GM13977 (cell line): ENCODE measurements at regions of chr13 and their contacts with region 1.

Region 1: DNA sequence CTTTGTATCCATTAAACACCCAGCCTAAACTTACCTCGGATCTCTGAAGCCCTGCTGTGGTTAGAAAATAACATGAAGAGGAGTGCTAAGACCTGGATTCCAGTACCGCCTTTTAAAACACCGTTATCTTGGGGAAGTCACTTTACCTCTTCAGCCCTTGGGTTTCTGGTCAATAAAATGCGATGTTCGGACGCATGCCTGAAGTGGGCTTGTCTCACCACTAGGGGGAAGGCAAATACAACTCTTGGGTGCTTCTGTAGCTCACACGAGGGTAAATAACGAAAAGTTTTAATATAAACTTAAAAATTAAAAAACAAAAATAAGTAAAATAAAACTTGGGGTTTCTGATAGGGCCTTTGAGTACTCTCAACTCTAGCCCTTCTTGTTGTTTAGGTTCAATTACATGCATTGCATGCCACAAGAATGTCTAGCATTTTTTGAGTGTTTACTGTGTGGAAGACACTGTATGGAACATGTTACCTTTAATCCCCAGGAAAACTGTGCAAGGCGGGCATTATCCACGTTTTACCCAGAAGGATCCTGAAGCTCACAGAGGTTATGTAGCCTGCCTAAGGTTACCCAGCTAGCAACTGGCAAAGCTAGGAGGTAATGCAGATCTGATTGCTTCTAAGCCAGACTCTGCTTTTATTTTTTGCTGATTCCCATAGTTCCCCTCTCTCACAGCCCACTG is 240.4 kb downstream of the LMO7 start:
- DNase-seq: peak; percentile 55
- CTCF ChIP-seq: peak; percentile 90

Region 2: DNA sequence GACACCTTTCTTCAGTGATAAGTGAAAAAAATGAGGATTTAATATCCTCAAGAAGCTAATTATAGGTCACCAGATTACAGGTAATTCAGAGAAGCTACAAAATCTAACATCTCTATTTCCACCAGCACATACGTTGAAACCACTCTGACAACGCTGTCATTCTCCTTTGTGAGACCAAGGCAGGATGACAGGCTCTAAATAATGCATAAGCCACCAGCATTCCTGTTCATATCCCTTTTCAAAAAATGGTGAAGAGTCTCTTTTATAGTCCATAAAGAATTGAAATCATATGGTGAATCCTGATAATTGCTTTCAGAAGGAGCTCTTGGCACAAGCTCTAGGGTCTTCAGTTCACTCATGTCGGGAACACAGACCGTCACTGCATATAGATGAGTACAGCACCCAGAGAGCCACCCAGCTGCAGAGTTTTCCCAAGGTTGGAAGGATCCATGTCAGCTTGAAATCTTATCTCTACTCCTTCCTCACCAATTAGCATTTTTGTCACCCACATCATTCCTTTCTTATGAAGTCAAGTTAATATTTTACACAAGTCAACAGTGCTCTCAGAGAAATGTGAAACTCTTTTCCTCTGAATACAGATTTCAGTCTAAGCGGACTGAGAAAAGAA is 826.0 kb before region 1 on chr13:
- in situ Hi-C with region 1: no loop called
- DNase-seq: no peak
- CTCF ChIP-seq: no peak

Region 3: GRCh38 chr13:75687150-75687763 is 189.2 kb before region 1 on chr13:
- in situ Hi-C with region 1: loop called (anchors 10 kb)
- DNase-seq: no peak
- CTCF ChIP-seq: peak; percentile 52

Region 4: GRCh38 chr13:76016799-76017400 is 140.4 kb after region 1 on chr13:
- in situ Hi-C with region 1: loop called (anchors 10 kb)
- DNase-seq: peak; percentile 18
- CTCF ChIP-seq: peak; percentile 68

Region 5: GRCh38 chr13:76473552-76474134 is 597.1 kb after region 1 on chr13:
- in situ Hi-C with region 1: loop called (anchors 10 kb)
- DNase-seq: peak; percentile 28
- CTCF ChIP-seq: peak; percentile 63

Region 6: GRCh38 chr13:76903544-76904162 is 1027.1 kb after region 1 on chr13:
- in situ Hi-C with region 1: loop called (anchors 10 kb)
- DNase-seq: peak; percentile 59
- CTCF ChIP-seq: peak; percentile 96